ENCODE measurements at regions of chr12 and their contacts with region 1.

Region 1: DNA sequence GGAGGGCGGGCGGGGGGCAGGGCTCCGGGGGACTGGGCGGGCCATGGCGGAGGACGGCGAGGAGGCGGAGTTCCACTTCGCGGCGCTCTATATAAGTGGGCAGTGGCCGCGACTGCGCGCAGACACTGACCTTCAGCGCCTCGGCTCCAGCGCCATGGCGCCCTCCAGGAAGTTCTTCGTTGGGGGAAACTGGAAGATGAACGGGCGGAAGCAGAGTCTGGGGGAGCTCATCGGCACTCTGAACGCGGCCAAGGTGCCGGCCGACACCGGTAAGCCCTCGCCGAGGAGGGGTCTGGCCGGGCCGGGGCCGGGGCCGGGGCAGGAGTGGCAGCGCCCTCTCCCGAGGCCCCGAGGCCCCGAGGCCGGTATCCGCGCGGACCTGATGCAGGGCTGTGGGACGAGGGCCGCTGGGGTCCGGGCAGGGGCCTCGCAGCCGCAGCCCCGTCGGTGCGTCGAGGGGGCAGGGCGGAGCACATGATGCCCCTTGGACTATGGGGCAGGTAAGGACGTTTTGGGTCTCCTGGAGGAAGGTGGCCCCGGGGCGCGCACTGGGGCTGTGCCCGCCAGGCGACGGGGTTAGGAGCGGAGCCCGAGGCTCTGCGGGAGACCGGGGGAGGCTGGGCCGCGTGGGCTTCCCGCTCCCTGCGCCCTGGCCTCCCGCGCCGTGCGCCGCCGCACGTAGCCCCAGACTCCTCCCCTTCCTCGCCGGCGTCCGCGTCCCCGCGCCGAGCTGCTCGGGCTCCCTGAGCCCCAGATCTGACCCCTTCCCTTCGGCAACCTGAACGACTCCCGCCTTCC is at the start of gene TPI1:
- DNase-seq: peak in 2 of 3 donors; percentile 30 to 42
- H3K4me3 ChIP-seq: peak within 1 kb of the TSS; percentile 63 to 89 (median 78)
- H3K27ac ChIP-seq: peak within 1 kb of the TSS; percentile 25 to 80
- H3K4me1 ChIP-seq: peaks cover 8 to 55% (median 46%) of the 10 kb centered on the region in 4 experiments
- H3K27me3 ChIP-seq: no peaks in the 10 kb centered on the region

Region 2: DNA sequence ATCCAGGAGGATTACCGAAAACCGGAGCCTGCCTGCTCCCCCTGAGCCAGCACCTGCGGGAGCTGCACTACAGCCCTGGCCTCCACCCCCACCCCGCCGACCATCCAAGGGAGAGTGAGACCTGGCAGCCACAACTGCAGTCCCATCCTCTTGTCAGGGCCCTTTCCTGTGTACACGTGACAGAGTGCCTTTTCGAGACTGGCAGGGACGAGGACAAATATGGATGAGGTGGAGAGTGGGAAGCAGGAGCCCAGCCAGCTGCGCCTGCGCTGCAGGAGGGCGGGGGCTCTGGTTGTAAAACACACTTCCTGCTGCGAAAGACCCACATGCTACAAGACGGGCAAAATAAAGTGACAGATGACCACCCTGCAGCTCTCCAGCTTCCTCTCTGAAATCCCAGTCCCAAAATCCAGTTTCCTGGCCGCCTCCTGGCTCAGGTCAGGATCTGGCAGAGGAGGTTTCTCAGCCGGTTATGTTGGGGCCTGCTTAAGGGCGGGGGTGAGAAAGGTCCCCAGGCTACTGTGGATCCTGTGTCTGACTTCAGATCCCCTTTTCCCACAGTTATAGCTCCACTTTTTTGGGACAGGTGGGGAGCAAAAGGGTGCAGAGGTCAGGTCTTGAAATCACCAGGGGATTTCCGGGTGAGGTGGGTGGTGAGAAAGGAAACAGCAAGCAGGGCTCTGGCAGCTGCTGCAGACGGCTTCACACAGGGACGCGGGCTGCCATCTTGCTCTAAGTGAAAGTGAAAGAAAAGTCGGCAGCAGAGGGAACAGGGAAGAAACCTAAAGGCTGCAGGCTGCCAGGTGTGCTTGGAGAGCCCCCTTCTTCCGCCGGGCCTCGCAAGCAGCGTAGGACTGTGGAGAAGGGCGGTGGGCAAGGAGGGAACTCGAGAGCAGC is 416.0 kb before region 1 on chr12 and contains the start of gene TAPBPL:
- CTCF ChIA-PET with region 1: no interaction called
- POLR2A ChIA-PET with region 1: no interaction called
- DNase-seq: peak; percentile 78 to 92 (median 89)
- H3K4me3 ChIP-seq: peak within 1 kb of the TSS; percentile 64 to 98 (median 93)
- H3K27ac ChIP-seq: peak within 1 kb of the TSS; percentile 84 to 95
- H3K4me1 ChIP-seq: peaks cover 5 to 31% (median 28%) of the 10 kb centered on the region in 4 experiments
- H3K27me3 ChIP-seq: no peaks in the 10 kb centered on the region

Region 3: GRCh38 chr12:6684609-6685008 is 183.0 kb before region 1 on chr12:
- CTCF ChIA-PET with region 1: no interaction called
- POLR2A ChIA-PET with region 1: no interaction called
- DNase-seq: peak; percentile 66 to 80 (median 80)
- H3K4me3 ChIP-seq: no peak overlapping the region
- H3K27ac ChIP-seq: no peak overlapping the region
- H3K4me1 ChIP-seq: peaks cover 10 to 33% (median 28%) of the 10 kb centered on the region in 4 experiments
- H3K27me3 ChIP-seq: no peaks in the 10 kb centered on the region

Region 4: GRCh38 chr12:6851921-6852650 is 15.5 kb before region 1 on chr12 and contains the start of gene USP5:
- CTCF ChIA-PET with region 1: interaction called, 85 read pairs
- POLR2A ChIA-PET with region 1: interaction called, 7 read pairs
- DNase-seq: peak; percentile 100
- H3K4me3 ChIP-seq: peak within 1 kb of the TSS; percentile 82 to 99 (median 90)
- H3K27ac ChIP-seq: peak within 1 kb of the TSS; percentile 80 to 89
- H3K4me1 ChIP-seq: peaks cover 5 to 41% (median 32%) of the 10 kb centered on the region in 4 experiments
- H3K27me3 ChIP-seq: no peaks in the 10 kb centered on the region

Region 5: GRCh38 chr12:6904280-6905278 is 37.0 kb after region 1 on chr12 and contains the start of gene LRRC23:
- CTCF ChIA-PET with region 1: interaction called, 105 read pairs
- POLR2A ChIA-PET with region 1: interaction called, 6 read pairs
- DNase-seq: peak; percentile 96 to 98 (median 97)
- H3K4me3 ChIP-seq: peak within 1 kb of the TSS; percentile 54 to 87 (median 73)
- H3K27ac ChIP-seq: peak within 1 kb of the TSS; percentile 93 to 97
- H3K4me1 ChIP-seq: peaks cover 17 to 39% (median 35%) of the 10 kb centered on the region in 4 experiments
- H3K27me3 ChIP-seq: no peaks in the 10 kb centered on the region

Region 6: GRCh38 chr12:6937481-6938297 is 70.1 kb after region 1 on chr12:
- CTCF ChIA-PET with region 1: interaction called, 34 read pairs
- POLR2A ChIA-PET with region 1: interaction called, 4 read pairs
- DNase-seq: peak; percentile 95 to 98 (median 98)
- H3K4me3 ChIP-seq: peak overlapping the region; percentile 15 to 87 (median 81)
- H3K27ac ChIP-seq: peak overlapping the region; percentile 74 to 86
- H3K4me1 ChIP-seq: peaks cover 0 to 32% (median 28%) of the 10 kb centered on the region in 4 experiments
- H3K27me3 ChIP-seq: no peaks in the 10 kb centered on the region

Region 7: GRCh38 chr12:6944381-6945186 is 77.0 kb after region 1 on chr12:
- CTCF ChIA-PET with region 1: interaction called, 34 read pairs
- POLR2A ChIA-PET with region 1: interaction called, 21 read pairs
- DNase-seq: peak; percentile 90 to 94 (median 93)
- H3K4me3 ChIP-seq: peak overlapping the region; percentile 41 to 89 (median 71)
- H3K27ac ChIP-seq: peak overlapping the region; percentile 97 to 99
- H3K4me1 ChIP-seq: peaks cover 3 to 53% (median 48%) of the 10 kb centered on the region in 4 experiments
- H3K27me3 ChIP-seq: no peaks in the 10 kb centered on the region

Region 8: DNA sequence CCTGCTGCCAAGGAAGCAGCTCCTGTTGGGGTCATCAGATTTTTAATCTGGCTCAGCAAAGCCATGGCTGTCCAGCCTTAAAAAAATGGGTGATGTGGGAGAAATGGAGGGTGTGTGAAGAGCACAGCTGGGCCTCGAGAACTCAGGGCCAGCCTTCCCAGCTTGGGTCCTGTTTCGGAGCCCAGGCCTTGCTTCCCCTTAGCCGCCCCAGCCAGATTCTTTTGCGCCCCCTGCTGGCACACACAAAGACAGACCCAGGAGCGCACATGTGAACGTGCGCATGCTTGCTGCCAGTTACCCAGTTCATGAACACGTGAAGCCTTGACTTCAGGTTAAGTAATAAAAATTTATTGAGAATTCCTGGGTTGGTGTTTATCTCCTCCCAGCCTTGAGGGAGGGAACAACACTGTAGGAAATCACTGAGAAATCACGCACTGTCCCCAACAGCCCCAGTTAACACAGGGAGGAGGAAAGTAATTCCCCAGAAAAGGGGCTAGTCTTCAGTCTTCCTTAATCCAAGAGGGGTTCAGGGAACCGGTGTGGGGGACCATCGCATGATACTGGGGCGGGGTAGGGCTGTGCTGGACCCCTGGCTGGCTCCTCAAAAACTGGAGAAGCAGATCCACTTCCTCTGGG is 97.5 kb after region 1 on chr12:
- CTCF ChIA-PET with region 1: interaction called, 13 read pairs
- POLR2A ChIA-PET with region 1: no interaction called
- DNase-seq: peak; percentile 89 to 94 (median 91)
- H3K4me3 ChIP-seq: no peak overlapping the region
- H3K27ac ChIP-seq: peak overlapping the region in 1 of 2 experiments; percentile 50
- H3K4me1 ChIP-seq: peaks cover 2 to 64% (median 54%) of the 10 kb centered on the region in 4 experiments
- H3K27me3 ChIP-seq: no peaks in the 10 kb centered on the region

Region 9: GRCh38 chr12:7282844-7283243 is 415.2 kb after region 1 on chr12:
- CTCF ChIA-PET with region 1: no interaction called
- POLR2A ChIA-PET with region 1: no interaction called
- DNase-seq: peak in 2 of 3 donors; percentile 50 to 51
- H3K4me3 ChIP-seq: no peak overlapping the region
- H3K27ac ChIP-seq: no peak overlapping the region
- H3K4me1 ChIP-seq: peaks cover 0 to 13% (median 9%) of the 10 kb centered on the region in 4 experiments
- H3K27me3 ChIP-seq: no peaks in the 10 kb centered on the region

Measured in common myeloid progenitor, CD34-positive (primary cell).